ENCODE measurements at regions of chr17 and their contacts with region 1.

Region 1: DNA sequence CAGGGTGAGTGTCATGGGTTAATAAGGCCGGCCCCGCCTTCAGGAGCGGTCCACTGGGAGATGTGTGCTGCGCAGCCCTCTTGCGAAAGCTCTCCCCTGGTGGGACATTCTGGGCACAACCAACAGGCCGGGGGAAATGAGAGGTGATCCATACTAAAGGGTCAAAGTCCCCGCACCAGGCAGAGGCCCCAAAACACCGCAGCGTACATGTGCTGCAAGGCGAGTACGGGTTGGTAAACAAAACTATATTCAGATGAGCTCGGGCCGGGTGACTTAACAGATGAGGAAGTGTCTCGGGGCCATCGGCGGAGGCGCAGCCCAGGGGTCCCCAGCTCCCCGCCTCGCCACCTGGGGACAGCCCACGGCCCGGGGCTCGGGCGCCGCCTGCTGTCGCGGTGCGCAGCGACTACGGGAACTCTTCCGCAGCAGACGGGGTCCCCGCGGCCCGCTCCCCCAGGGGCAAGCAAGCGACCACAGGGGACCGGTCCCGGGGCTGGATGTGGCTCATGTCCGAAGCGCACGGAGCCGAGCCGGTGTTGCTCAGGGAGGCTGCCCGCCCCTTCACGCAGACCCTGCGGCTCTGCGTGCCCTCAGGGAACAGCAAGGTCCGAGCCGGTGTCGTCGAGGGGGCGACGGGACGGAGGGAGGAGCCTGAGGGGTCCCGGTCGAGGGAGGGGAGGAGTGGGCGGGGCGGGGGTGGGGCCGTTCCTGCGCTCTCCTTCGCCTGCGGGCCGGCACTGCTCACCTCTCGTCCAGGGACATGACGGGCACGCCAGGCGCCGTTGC is at the start of gene RAB37:
- DNase-seq: peak in 8 of 9 experiments; percentile 43 to 81 (median 62)
- ATAC-seq: peak; percentile 30
- H3K4me3 ChIP-seq: peak within 1 kb of the TSS; percentile 65 to 85
- H3K4me3 Mint-ChIP-seq: peak within 1 kb of the TSS; percentile 91
- H3K27ac ChIP-seq: peak within 1 kb of the TSS; percentile 47 to 55
- H3K27ac Mint-ChIP-seq: peak within 1 kb of the TSS; percentile 93
- H3K4me1 ChIP-seq: peaks cover 42% of the 10 kb centered on the region
- H3K4me1 Mint-ChIP-seq: peaks cover 51% of the 10 kb centered on the region
- H3K27me3 ChIP-seq: no peaks in the 10 kb centered on the region
- H3K27me3 Mint-ChIP-seq: no peaks in the 10 kb centered on the region
- CTCF ChIP-seq: peak; percentile 58
- total RNA-seq, gene RAB37: 33.7 to 36.0 TPM

Region 2: GRCh38 chr17:74379495-74380085 is 357.1 kb before region 1 on chr17:
- CTCF ChIA-PET with region 1: no interaction called
- POLR2A ChIA-PET with region 1: no interaction called
- intact Hi-C with region 1: loop called in 1 of 2 experiments (anchors 10 kb)
- DNase-seq: peak; percentile 88 to 97 (median 90)
- ATAC-seq: peak; percentile 93
- H3K4me3 ChIP-seq: peak overlapping the region in 1 of 2 experiments; percentile 32
- H3K4me3 Mint-ChIP-seq: no peak overlapping the region
- H3K27ac ChIP-seq: peak overlapping the region in 1 of 2 experiments; percentile 37
- H3K27ac Mint-ChIP-seq: no peak overlapping the region
- H3K4me1 ChIP-seq: peaks cover 10% of the 10 kb centered on the region
- H3K4me1 Mint-ChIP-seq: peaks cover 6% of the 10 kb centered on the region
- H3K27me3 ChIP-seq: no peaks in the 10 kb centered on the region
- H3K27me3 Mint-ChIP-seq: peaks cover 3% of the 10 kb centered on the region
- CTCF ChIP-seq: peak; percentile 81

Region 3: GRCh38 chr17:74646231-74646630 is 90.5 kb before region 1 on chr17:
- CTCF ChIA-PET with region 1: interaction called, 11 read pairs
- POLR2A ChIA-PET with region 1: interaction called, 3 read pairs
- intact Hi-C with region 1: no loop called
- DNase-seq: peak in 2 of 9 experiments; percentile 26 to 48
- ATAC-seq: no peak
- H3K4me3 ChIP-seq: no peak overlapping the region
- H3K4me3 Mint-ChIP-seq: no peak overlapping the region
- H3K27ac ChIP-seq: no peak overlapping the region
- H3K27ac Mint-ChIP-seq: no peak overlapping the region
- H3K4me1 ChIP-seq: no peaks in the 10 kb centered on the region
- H3K4me1 Mint-ChIP-seq: no peaks in the 10 kb centered on the region
- H3K27me3 ChIP-seq: peaks cover 0 to 6% of the 10 kb centered on the region in 2 experiments
- H3K27me3 Mint-ChIP-seq: peaks cover 50% of the 10 kb centered on the region
- CTCF ChIP-seq: no peak

Region 4: DNA sequence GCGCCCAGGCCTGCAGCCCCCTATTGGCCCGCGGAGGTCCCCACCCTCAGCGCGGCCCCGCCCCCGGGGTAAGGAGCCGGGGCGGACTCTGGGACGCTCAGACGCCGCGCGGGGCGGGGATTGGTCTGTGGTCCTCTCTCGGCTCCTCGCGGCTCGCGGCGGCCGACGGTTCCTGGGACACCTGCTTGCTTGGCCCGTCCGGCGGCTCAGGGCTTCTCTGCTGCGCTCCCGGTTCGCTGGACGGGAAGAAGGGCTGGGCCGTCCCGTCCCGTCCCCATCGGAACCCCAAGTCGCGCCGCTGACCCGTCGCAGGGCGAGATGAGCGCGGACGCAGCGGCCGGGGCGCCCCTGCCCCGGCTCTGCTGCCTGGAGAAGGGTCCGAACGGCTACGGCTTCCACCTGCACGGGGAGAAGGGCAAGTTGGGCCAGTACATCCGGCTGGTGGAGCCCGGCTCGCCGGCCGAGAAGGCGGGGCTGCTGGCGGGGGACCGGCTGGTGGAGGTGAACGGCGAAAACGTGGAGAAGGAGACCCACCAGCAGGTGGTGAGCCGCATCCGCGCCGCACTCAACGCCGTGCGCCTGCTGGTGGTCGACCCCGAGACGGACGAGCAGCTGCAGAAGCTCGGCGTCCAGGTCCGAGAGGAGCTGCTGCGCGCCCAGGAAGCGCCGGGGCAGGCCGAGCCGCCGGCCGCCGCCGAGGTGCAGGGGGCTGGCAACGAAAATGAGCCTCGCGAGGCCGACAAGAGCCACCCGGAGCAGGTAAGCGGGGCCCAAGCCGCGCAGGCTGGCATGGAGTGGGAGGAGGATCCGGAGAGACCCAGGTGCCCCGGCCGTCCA is 12.0 kb after region 1 on chr17 and contains the start of gene NHERF1:
- CTCF ChIA-PET with region 1: interaction called, 52 read pairs
- POLR2A ChIA-PET with region 1: interaction called, 67 read pairs
- intact Hi-C with region 1: no loop called
- DNase-seq: peak; percentile 83 to 98 (median 92)
- ATAC-seq: peak; percentile 83
- H3K4me3 ChIP-seq: peak within 1 kb of the TSS; percentile 94 to 98
- H3K4me3 Mint-ChIP-seq: peak within 1 kb of the TSS; percentile 98
- H3K27ac ChIP-seq: peak within 1 kb of the TSS; percentile 60 to 80
- H3K27ac Mint-ChIP-seq: peak within 1 kb of the TSS; percentile 96
- H3K4me1 ChIP-seq: peaks cover 61% of the 10 kb centered on the region
- H3K4me1 Mint-ChIP-seq: peaks cover 67% of the 10 kb centered on the region
- H3K27me3 ChIP-seq: no peaks in the 10 kb centered on the region
- H3K27me3 Mint-ChIP-seq: no peaks in the 10 kb centered on the region
- CTCF ChIP-seq: no peak
- total RNA-seq, gene NHERF1: 72.5 to 73.7 TPM

Region 5: DNA sequence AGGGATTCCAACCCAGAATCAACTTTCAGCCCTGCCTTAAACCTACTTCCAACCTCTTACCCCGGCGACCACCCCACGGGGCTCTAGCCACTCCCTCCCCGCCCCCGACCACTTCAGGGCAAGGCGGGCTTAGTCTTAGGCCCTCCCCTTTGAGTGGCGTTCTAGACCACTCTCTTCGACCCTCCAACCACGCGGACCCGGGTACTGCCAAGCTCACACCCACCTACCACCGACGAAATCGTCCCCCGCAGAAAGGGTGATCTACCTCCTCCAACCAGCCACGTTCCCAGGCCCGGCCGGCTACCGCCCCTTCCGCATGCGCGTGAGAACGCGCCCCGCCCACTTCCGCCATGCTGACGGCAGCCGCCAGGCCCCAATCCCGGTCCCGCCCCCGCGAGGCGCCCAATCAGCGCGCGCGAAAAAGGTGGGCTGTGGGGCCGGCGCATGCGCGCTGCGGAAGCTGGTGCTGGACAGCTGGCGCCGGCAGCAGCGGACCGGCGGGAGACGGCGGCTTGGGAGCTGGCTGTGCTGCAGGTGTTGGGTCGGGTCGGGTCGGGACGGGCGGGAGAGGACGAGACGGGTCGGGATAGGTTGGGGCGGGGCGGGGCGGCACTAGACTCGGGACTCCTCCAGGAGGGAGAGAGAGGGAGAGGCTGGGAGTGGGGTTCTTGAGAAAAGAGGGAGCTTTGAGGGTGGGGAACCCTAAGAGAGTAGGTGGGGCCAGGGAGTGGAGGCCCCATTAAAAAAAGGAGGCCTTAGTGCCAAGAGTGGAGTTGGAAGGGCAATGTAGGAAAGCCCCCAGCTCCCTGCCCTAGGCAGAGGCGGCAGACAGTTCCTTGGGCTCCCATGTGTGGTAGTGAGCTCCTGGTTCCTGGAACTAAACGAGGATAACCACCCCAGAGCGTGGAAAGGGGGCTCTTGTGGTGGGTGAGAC is 39.6 kb after region 1 on chr17 and contains the start of gene NAT9:
- CTCF ChIA-PET with region 1: interaction called, 92 read pairs
- POLR2A ChIA-PET with region 1: interaction called, 22 read pairs
- intact Hi-C with region 1: no loop called
- DNase-seq: peak; percentile 97 to 100 (median 99)
- ATAC-seq: peak; percentile 74
- H3K4me3 ChIP-seq: peak within 1 kb of the TSS; percentile 68 to 83
- H3K4me3 Mint-ChIP-seq: peak within 1 kb of the TSS; percentile 99
- H3K27ac ChIP-seq: peak within 1 kb of the TSS; percentile 56 to 76
- H3K27ac Mint-ChIP-seq: peak within 1 kb of the TSS; percentile 97
- H3K4me1 ChIP-seq: peaks cover 47% of the 10 kb centered on the region
- H3K4me1 Mint-ChIP-seq: peaks cover 62% of the 10 kb centered on the region
- H3K27me3 ChIP-seq: no peaks in the 10 kb centered on the region
- H3K27me3 Mint-ChIP-seq: no peaks in the 10 kb centered on the region
- CTCF ChIP-seq: no peak
- total RNA-seq, gene NAT9: 37.9 to 41.1 TPM

Region 6: GRCh38 chr17:74873038-74873873 is 136.6 kb after region 1 on chr17:
- CTCF ChIA-PET with region 1: interaction called, 12 read pairs
- POLR2A ChIA-PET with region 1: interaction called, 19 read pairs
- intact Hi-C with region 1: loop called in 1 of 2 experiments (anchors 2 kb)
- DNase-seq: peak; percentile 98 to 100 (median 99)
- ATAC-seq: peak; percentile 93
- H3K4me3 ChIP-seq: peak overlapping the region; percentile 75 to 92
- H3K4me3 Mint-ChIP-seq: peak overlapping the region; percentile 96
- H3K27ac ChIP-seq: peak overlapping the region; percentile 78 to 99
- H3K27ac Mint-ChIP-seq: peak overlapping the region; percentile 99
- H3K4me1 ChIP-seq: peaks cover 17% of the 10 kb centered on the region
- H3K4me1 Mint-ChIP-seq: peaks cover 23% of the 10 kb centered on the region
- H3K27me3 ChIP-seq: no peaks in the 10 kb centered on the region
- H3K27me3 Mint-ChIP-seq: no peaks in the 10 kb centered on the region
- CTCF ChIP-seq: no peak

Measured in CD8-positive, alpha-beta T cell (primary cell).